GM12878 (cell line): ENCODE measurements at regions of chr2 and their contacts with region 1.

Region 1: DNA sequence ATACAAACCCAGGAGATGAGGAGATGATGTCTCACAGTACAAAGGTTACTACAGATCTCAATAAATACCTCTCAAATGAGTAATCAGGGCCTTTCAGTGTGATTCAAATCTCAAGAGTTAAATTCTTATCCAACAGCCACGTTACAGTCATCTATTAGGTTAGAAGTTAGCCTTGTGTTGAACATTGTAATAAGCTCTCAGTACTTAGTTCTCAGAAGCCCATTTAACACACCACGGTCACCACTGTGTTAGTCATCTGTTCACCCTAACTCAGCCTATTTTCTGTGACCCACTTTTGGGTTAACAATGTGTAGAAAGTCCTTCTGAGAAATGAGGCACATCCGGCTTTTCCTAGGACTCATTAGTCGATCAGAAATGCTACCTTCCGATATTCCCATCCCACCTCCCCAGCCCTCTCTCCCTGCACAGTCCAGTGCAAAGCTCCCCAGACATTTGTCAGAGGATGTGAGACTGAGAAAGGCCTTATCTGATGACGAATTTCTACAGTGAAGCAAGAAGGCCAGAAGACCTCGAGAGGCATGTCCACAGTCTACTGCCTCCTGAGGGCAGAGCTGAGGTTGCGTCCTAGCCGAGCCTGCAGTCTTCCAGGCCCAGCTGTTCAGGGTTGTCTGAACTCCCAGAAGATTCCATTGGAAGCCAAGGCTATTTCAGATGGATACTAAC is 92.6 kb downstream of the ACTR2 start:
- DNase-seq: peak; percentile 30
- ATAC-seq: peak; percentile 84
- H3K4me3 ChIP-seq: no peak overlapping the region
- H3K27ac ChIP-seq: peak overlapping the region; percentile 22
- H3K4me1 ChIP-seq: peaks cover 36% of the 10 kb centered on the region
- H3K27me3 ChIP-seq: no peaks in the 10 kb centered on the region
- CTCF ChIP-seq: peak; percentile 22 to 47 (median 42); a peak in 5 of 6 replicates
- EP300 ChIP-seq: peak in 1 of 2 experiments; percentile 57; a peak in 1 of 4 replicates
- POLR2A ChIP-seq: no peak
- RAD21 ChIP-seq: peak; percentile 48

Region 2: GRCh38 chr2:65300761-65301711 is 19.1 kb before region 1 on chr2:
- CTCF ChIA-PET with region 1: interaction called, 10 read pairs
- POLR2A ChIA-PET with region 1: interaction called, 4 read pairs
- RAD21 ChIA-PET with region 1: interaction called, 13 read pairs
- SMC1A ChIA-PET with region 1: interaction called, 29 read pairs
- in situ Hi-C with region 1: no loop called
- intact Hi-C with region 1: no loop called
- DNase-seq: peak; percentile 61
- ATAC-seq: peak; percentile 84
- H3K4me3 ChIP-seq: peak overlapping the region; percentile 17; the same call in 1 of the 2 replicates
- H3K27ac ChIP-seq: peak overlapping the region; percentile 38
- H3K4me1 ChIP-seq: peaks cover 40% of the 10 kb centered on the region
- H3K27me3 ChIP-seq: no peaks in the 10 kb centered on the region
- CTCF ChIP-seq: no peak
- EP300 ChIP-seq: no peak
- POLR2A ChIP-seq: no peak
- RAD21 ChIP-seq: no peak

Region 3: GRCh38 chr2:65350684-65351083 is 30.5 kb after region 1 on chr2:
- CTCF ChIA-PET with region 1: interaction called, 8 read pairs
- POLR2A ChIA-PET with region 1: interaction called, 7 read pairs
- RAD21 ChIA-PET with region 1: interaction called, 17 read pairs
- SMC1A ChIA-PET with region 1: interaction called, 14 read pairs
- in situ Hi-C with region 1: no loop called
- intact Hi-C with region 1: no loop called
- DNase-seq: no peak
- ATAC-seq: peak; percentile 92
- H3K4me3 ChIP-seq: no peak overlapping the region
- H3K27ac ChIP-seq: peak overlapping the region; percentile 29; the same call in 1 of the 2 replicates
- H3K4me1 ChIP-seq: peaks cover 24% of the 10 kb centered on the region
- H3K27me3 ChIP-seq: no peaks in the 10 kb centered on the region
- CTCF ChIP-seq: peak; percentile 11 to 58 (median 45); a peak in 5 of 6 replicates
- EP300 ChIP-seq: no peak
- POLR2A ChIP-seq: no peak
- RAD21 ChIP-seq: peak; percentile 46

Region 4: DNA sequence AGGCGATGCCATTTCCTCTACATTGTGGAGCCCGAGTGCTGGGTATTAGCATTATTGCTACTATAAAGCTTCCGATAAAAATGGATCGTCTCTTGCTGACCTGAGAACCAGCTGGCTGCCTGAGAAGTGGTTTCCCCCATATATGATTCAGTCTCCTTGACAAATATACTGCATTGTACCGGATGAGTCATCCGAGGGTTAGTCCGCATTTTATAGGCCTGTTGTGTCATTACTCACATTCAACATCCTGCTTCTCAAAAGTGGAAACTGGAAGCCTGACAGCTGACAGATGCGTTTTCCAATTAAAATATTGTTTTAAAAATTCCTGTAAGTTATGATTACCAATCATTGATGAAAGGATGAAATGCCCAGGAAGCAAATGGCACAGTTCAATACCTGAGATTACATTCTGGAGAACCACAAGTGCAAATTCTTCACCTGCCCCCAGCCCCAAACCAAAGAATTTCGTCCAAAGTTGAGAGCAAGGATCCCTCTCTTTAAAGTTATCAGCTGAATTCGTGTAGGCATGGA is 46.5 kb after region 1 on chr2:
- CTCF ChIA-PET with region 1: interaction called, 3 read pairs
- POLR2A ChIA-PET with region 1: no interaction called
- RAD21 ChIA-PET with region 1: interaction called, 5 read pairs
- SMC1A ChIA-PET with region 1: interaction called, 10 read pairs
- in situ Hi-C with region 1: no loop called
- intact Hi-C with region 1: no loop called
- DNase-seq: peak; percentile 11
- ATAC-seq: peak; percentile 53
- H3K4me3 ChIP-seq: no peak overlapping the region
- H3K27ac ChIP-seq: no peak overlapping the region; the same call in 1 of the 2 replicates
- H3K4me1 ChIP-seq: peaks cover 40% of the 10 kb centered on the region
- H3K27me3 ChIP-seq: no peaks in the 10 kb centered on the region
- CTCF ChIP-seq: no peak
- EP300 ChIP-seq: no peak
- POLR2A ChIP-seq: no peak
- RAD21 ChIP-seq: no peak

Region 5: DNA sequence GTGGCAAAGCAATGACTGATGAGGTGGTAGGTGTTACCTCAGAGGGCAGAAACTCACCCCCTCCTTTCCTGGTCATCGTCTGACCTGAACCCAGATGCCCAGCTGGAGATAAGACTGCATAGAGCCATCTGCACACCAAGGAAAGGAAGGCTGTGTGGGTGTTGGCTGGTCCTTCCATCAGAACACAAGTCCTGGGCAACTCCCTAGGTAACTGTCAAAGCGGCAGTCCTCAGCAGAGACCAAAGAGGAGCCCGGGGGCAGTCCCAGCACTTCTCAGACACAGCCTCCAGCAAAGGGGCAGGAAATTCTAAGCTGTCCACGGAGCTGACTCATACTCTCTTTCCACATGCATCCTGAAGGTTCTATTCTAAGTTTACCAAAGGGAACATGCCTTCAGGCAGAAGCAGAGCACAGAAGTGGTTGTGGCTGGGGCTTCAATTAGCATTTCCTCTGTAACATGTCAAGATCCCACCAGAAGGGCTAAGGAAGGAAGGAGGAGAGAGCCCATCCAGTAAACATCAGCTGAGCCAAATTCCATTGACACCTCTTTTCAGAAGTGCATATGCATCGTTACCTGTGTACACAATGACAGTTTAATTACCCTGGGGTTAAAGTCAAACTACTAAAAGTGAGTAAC is 57.5 kb after region 1 on chr2:
- CTCF ChIA-PET with region 1: interaction called, 4 read pairs
- POLR2A ChIA-PET with region 1: interaction called, 3 read pairs
- RAD21 ChIA-PET with region 1: interaction called, 14 read pairs
- SMC1A ChIA-PET with region 1: interaction called, 10 read pairs
- in situ Hi-C with region 1: no loop called
- intact Hi-C with region 1: no loop called
- DNase-seq: no peak
- ATAC-seq: peak; percentile 64
- H3K4me3 ChIP-seq: no peak overlapping the region
- H3K27ac ChIP-seq: no peak overlapping the region
- H3K4me1 ChIP-seq: peaks cover 29% of the 10 kb centered on the region
- H3K27me3 ChIP-seq: no peaks in the 10 kb centered on the region
- CTCF ChIP-seq: no peak
- EP300 ChIP-seq: no peak
- POLR2A ChIP-seq: no peak
- RAD21 ChIP-seq: no peak

Region 6: DNA sequence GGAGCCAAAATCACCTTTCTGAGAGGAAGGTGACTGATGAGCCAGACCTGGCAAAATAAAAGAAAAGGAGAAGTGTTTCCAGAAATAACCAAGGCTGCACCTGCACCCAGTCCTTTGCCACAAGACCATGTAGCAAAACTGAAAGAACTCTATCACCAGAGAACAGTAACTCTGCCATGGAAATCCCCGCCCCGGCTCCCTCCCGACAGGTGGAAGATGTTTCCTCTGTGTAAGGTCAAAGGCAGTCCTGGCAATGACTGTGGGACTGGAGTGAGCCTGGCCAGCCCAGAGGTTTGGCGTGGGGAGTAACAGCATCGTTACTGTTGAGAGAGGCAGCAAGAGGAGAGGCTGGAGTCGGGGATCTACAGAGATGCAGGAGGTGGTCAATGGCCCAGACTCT is 70.0 kb after region 1 on chr2:
- CTCF ChIA-PET with region 1: interaction called, 4 read pairs
- POLR2A ChIA-PET with region 1: interaction called, 3 read pairs
- RAD21 ChIA-PET with region 1: interaction called, 5 read pairs
- SMC1A ChIA-PET with region 1: interaction called, 8 read pairs
- in situ Hi-C with region 1: no loop called
- intact Hi-C with region 1: loop called (anchors 2 kb)
- DNase-seq: peak; percentile 71
- ATAC-seq: peak; percentile 73
- H3K4me3 ChIP-seq: 0 out of 2 replicates have a peak overlapping the region, but pooled peaks have one; percentile 22
- H3K27ac ChIP-seq: peak overlapping the region; percentile 78
- H3K4me1 ChIP-seq: peaks cover 74% of the 10 kb centered on the region
- H3K27me3 ChIP-seq: no peaks in the 10 kb centered on the region
- CTCF ChIP-seq: no peak
- EP300 ChIP-seq: peak; percentile 62 to 85; a peak in 3 of 4 replicates
- POLR2A ChIP-seq: peak; percentile 56
- RAD21 ChIP-seq: no peak

Region 7: GRCh38 chr2:65402780-65403528 is 82.8 kb after region 1 on chr2:
- CTCF ChIA-PET with region 1: no interaction called
- POLR2A ChIA-PET with region 1: interaction called, 5 read pairs
- RAD21 ChIA-PET with region 1: interaction called, 3 read pairs
- SMC1A ChIA-PET with region 1: interaction called, 25 read pairs
- in situ Hi-C with region 1: no loop called
- intact Hi-C with region 1: no loop called
- DNase-seq: no peak
- ATAC-seq: no peak
- H3K4me3 ChIP-seq: no peak overlapping the region
- H3K27ac ChIP-seq: no peak overlapping the region
- H3K4me1 ChIP-seq: peaks cover 22% of the 10 kb centered on the region
- H3K27me3 ChIP-seq: no peaks in the 10 kb centered on the region
- CTCF ChIP-seq: no peak
- EP300 ChIP-seq: no peak
- POLR2A ChIP-seq: no peak
- RAD21 ChIP-seq: no peak